ENCODE measurements at regions of chr7 and their contacts with region 1.

Region 1: GRCh38 chr7:35694781-35695472 is at the start of gene HERPUD2:
- DNase-seq: peak; percentile 89 to 94 (median 93)
- ATAC-seq: peak; percentile 92
- H3K4me3 ChIP-seq: peak within 1 kb of the TSS; percentile 92
- H3K4me3 Mint-ChIP-seq: peak within 1 kb of the TSS; percentile 88 to 99 (median 97)
- H3K27ac ChIP-seq: peak within 1 kb of the TSS; percentile 98
- H3K27ac Mint-ChIP-seq: peak within 1 kb of the TSS; percentile 93 to 100 (median 98)
- H3K4me1 ChIP-seq: peaks cover 16 to 18% of the 10 kb centered on the region in 2 donors
- H3K4me1 Mint-ChIP-seq: peaks cover 47 to 62% (median 57%) of the 10 kb centered on the region in 7 donors
- H3K27me3 ChIP-seq: no peaks in the 10 kb centered on the region
- H3K27me3 Mint-ChIP-seq: no peaks in the 10 kb centered on the region
- total RNA-seq, gene HERPUD2: 38.1 to 92.6 (median 62.4) TPM

Region 2: DNA sequence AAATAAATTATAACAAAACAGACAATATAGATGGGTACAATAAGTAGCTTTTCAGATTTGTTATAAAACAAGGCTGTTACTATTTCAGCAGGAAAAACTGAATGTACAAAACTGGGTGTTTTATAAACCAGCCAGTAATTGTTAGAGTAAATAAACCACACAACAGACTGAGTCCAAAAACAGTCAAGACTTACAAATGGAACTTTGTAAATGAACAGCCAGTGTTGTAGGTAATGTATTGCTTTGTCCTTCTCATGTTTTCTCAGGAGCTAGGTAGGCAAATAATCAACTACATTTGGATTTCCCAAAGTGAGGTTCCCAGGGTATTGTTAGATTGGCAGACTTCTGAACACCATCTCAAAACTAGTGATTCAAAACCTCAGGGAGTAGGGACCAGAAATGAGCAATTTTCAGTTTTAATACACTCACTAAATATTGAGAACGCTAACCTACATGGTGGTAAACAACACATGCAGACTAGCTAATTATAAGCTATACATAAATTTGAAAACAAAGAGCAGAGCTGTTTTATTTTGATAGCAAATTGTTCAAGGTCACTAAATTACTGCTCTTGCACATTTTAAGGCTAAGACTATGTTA is 36.2 kb before region 1 on chr7:
- CTCF ChIA-PET with region 1: no interaction called
- POLR2A ChIA-PET with region 1: no interaction called
- intact Hi-C with region 1: loop called in 1 of 2 experiments (anchors 5 kb)
- DNase-seq: no peak
- ATAC-seq: no peak
- H3K4me3 ChIP-seq: no peak overlapping the region
- H3K4me3 Mint-ChIP-seq: no peak overlapping the region
- H3K27ac ChIP-seq: peak overlapping the region; percentile 33
- H3K27ac Mint-ChIP-seq: peak overlapping the region in 4 of 9 donors; percentile 37 to 65 (median 46)
- H3K4me1 ChIP-seq: peaks cover 0 to 5% of the 10 kb centered on the region in 2 donors
- H3K4me1 Mint-ChIP-seq: peaks cover 21 to 58% (median 49%) of the 10 kb centered on the region in 7 donors
- H3K27me3 ChIP-seq: no peaks in the 10 kb centered on the region
- H3K27me3 Mint-ChIP-seq: no peaks in the 10 kb centered on the region

Region 3: DNA sequence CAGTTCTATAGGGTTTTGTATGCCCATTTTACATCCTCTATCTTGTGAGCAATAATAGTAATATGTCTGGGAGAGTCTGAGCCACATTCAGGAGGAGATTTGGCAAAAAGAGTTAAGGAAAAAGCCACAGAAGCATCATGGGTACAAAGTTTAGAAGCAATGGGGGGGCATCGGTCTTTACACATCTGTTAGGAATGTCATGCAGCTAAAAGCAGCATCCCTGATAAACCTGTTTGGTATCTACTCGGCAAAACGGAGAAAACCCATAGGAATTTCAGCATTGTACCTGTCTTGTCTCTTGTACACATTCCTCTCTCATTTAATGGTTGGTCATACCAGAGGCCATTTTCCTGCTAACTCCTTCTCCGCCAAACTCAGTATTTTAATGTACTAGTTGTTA is 12.5 kb after region 1 on chr7:
- CTCF ChIA-PET with region 1: interaction called, 6 read pairs
- POLR2A ChIA-PET with region 1: interaction called, 42 read pairs
- intact Hi-C with region 1: loop called (anchors 1 kb)
- DNase-seq: no peak
- ATAC-seq: no peak
- H3K4me3 ChIP-seq: no peak overlapping the region
- H3K4me3 Mint-ChIP-seq: no peak overlapping the region
- H3K27ac ChIP-seq: no peak overlapping the region
- H3K27ac Mint-ChIP-seq: peak overlapping the region in 1 of 9 donors; percentile 15
- H3K4me1 ChIP-seq: peaks cover 8% of the 10 kb centered on the region in 2 donors
- H3K4me1 Mint-ChIP-seq: peaks cover 5 to 30% (median 21%) of the 10 kb centered on the region in 7 donors
- H3K27me3 ChIP-seq: no peaks in the 10 kb centered on the region
- H3K27me3 Mint-ChIP-seq: peaks cover 0 to 21% (median 0%) of the 10 kb centered on the region in 5 donors

Region 4: GRCh38 chr7:35878351-35878750 is 183.4 kb after region 1 on chr7:
- CTCF ChIA-PET with region 1: no interaction called
- POLR2A ChIA-PET with region 1: no interaction called
- intact Hi-C with region 1: no loop called
- DNase-seq: no peak
- ATAC-seq: no peak
- H3K4me3 ChIP-seq: no peak overlapping the region
- H3K4me3 Mint-ChIP-seq: no peak overlapping the region
- H3K27ac ChIP-seq: no peak overlapping the region
- H3K27ac Mint-ChIP-seq: peak overlapping the region in 6 of 9 donors; percentile 1 to 64 (median 33)
- H3K4me1 ChIP-seq: no peaks in the 10 kb centered on the region
- H3K4me1 Mint-ChIP-seq: peaks cover 0 to 28% (median 16%) of the 10 kb centered on the region in 7 donors
- H3K27me3 ChIP-seq: no peaks in the 10 kb centered on the region
- H3K27me3 Mint-ChIP-seq: no peaks in the 10 kb centered on the region

Region 5: GRCh38 chr7:35906191-35906908 is 211.4 kb after region 1 on chr7:
- CTCF ChIA-PET with region 1: interaction called, 4 read pairs
- POLR2A ChIA-PET with region 1: interaction called, 5 read pairs
- intact Hi-C with region 1: loop called in 1 of 2 experiments (anchors 1 kb)
- DNase-seq: peak; percentile 21 to 79 (median 70)
- ATAC-seq: peak; percentile 97
- H3K4me3 ChIP-seq: no peak overlapping the region
- H3K4me3 Mint-ChIP-seq: no peak overlapping the region
- H3K27ac ChIP-seq: no peak overlapping the region
- H3K27ac Mint-ChIP-seq: peak overlapping the region in 6 of 9 donors; percentile 37 to 88 (median 66)
- H3K4me1 ChIP-seq: no peaks in the 10 kb centered on the region
- H3K4me1 Mint-ChIP-seq: peaks cover 0 to 10% (median 0%) of the 10 kb centered on the region in 7 donors
- H3K27me3 ChIP-seq: no peaks in the 10 kb centered on the region
- H3K27me3 Mint-ChIP-seq: no peaks in the 10 kb centered on the region

Region 6: DNA sequence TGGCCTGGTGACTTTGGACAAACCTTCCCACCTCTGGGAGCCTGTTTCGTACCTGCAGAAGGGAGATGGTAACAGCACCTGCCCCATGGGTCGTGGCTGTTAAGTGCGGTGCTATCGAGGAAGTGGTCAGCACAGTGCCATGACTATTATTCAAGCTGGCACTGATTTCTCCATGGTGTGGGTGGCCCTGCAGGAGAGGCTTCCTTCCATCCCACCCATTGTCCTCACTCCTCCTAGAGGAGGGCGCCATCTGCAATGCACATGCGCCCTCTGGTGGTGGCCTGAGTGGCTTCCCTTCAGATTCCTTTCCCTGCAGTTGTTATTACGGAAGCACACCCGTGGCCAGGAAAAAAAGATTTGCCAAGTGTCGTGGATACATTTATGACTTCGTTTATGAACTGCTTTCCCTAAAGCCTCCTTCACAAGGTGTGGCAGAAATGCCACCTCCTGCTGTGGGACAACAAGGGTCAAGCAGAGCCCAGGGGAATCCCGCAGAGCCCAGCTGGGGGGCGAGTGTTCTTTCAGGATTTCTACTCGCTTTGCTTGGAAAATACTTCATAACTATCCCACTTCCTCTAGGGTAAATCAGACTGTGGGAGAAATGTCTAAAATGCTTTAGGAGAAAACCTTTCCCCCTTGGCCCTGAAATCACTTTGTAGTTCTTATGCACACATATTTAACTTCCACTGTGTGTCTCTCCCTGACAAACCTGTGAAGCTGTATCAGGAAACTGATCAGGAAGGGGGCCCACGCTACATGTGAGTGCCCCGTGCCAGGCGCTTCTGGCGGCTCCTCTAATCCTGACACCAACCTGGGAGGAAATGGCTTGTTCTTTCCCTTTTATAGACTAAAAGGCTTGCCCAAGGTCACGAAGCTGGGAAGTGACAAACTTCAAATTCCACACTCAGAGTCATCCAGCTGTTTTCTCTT is 596.7 kb after region 1 on chr7:
- CTCF ChIA-PET with region 1: interaction called, 3 read pairs
- POLR2A ChIA-PET with region 1: interaction called, 8 read pairs
- intact Hi-C with region 1: loop called in 1 of 2 experiments (anchors 2 kb)
- DNase-seq: peak; percentile 37 to 78 (median 68)
- ATAC-seq: peak; percentile 76
- H3K4me3 ChIP-seq: peak overlapping the region; percentile 38
- H3K4me3 Mint-ChIP-seq: peak overlapping the region; percentile 54 to 83 (median 73)
- H3K27ac ChIP-seq: no peak overlapping the region
- H3K27ac Mint-ChIP-seq: peak overlapping the region in 8 of 9 donors; percentile 3 to 83 (median 50)
- H3K4me1 ChIP-seq: peaks cover 26% of the 10 kb centered on the region in 2 donors
- H3K4me1 Mint-ChIP-seq: peaks cover 29 to 47% (median 40%) of the 10 kb centered on the region in 7 donors
- H3K27me3 ChIP-seq: no peaks in the 10 kb centered on the region
- H3K27me3 Mint-ChIP-seq: no peaks in the 10 kb centered on the region

Region 7: DNA sequence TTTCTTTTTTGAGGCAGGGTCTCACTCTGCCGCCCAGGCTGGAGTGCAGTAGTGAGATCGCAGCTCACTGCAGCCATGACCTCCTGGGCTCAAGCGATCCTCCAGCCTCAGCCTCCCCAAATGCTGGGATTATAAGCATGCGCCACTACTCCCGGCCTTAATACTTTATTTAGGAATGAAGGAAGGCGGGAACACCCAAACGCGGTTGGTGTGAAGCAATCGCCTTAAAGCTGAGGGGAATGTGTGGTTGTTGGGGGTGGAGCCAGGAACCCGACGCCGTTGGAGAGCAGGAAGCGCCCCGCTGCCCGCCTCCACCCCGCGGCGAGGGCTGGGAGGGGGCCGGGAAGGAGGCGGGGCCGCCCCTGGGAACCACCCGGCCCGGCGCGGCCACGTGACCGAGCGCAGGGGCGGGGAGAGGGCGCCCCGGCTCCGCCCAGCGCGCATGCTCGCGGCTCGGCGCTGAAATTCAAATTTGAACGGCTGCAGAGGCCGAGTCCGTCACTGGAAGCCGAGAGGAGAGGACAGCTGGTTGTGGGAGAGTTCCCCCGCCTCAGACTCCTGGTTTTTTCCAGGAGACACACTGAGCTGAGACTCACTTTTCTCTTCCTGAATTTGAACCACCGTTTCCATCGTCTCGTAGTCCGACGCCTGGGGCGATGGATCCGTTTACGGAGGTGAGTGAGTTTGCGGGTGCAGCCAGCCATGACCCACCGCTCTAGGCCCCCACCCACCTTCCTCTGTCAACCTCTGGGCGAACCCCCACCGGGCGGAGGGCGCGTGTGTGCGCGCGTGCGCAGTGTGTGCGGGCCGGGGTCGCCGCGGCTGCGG is 694.7 kb after region 1 on chr7 and contains the start of gene ANLN:
- CTCF ChIA-PET with region 1: no interaction called
- POLR2A ChIA-PET with region 1: no interaction called
- intact Hi-C with region 1: loop called (anchors 1 to 5 kb)
- DNase-seq: peak; percentile 71 to 91 (median 82)
- ATAC-seq: peak; percentile 98
- H3K4me3 ChIP-seq: peak within 1 kb of the TSS; percentile 78
- H3K4me3 Mint-ChIP-seq: peak within 1 kb of the TSS; percentile 77 to 90 (median 85)
- H3K27ac ChIP-seq: peak within 1 kb of the TSS; percentile 67
- H3K27ac Mint-ChIP-seq: peak within 1 kb of the TSS; percentile 72 to 90 (median 81)
- H3K4me1 ChIP-seq: peaks cover 8 to 19% of the 10 kb centered on the region in 2 donors
- H3K4me1 Mint-ChIP-seq: peaks cover 12 to 39% (median 26%) of the 10 kb centered on the region in 7 donors
- H3K27me3 ChIP-seq: no peaks in the 10 kb centered on the region
- H3K27me3 Mint-ChIP-seq: peaks cover 0 to 12% (median 0%) of the 10 kb centered on the region in 5 donors
- total RNA-seq, gene ANLN: 0.35 to 48.6 (median 0.82) TPM

Measured in naive thymus-derived CD4-positive, alpha-beta T cell (primary cell).